Upper lobe of right lung (tissue), 1 donor: ENCODE measurements at regions of chr16 and their contacts with region 1.

Region 1: DNA sequence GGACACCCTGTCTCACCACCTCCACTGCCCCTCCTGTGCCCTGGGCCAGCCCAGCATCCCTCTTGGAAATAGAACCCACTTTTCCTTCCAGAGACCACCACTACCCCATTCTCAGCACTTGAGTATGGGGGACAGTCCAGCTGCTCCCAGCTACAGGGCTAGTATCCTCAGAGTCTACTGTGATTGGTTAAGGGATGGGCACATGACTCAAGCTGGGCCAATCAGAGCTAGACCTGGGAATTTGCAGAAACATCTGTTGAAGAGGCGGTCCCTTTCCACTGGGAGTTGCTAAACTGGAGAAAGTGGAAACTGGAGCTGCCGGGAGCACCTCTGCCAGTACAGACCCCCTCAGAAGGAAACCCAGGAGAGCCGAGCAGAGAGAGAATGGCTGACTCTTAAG is 156.6 kb downstream of the GSG1L start:
- DNase-seq: no peak
- ATAC-seq: no peak
- H3K4me3 ChIP-seq: no peak overlapping the region
- H3K27ac ChIP-seq: no peak overlapping the region
- H3K4me1 ChIP-seq: no peaks in the 10 kb centered on the region
- H3K27me3 ChIP-seq: peaks cover 5% of the 10 kb centered on the region
- CTCF ChIP-seq: no peak

Region 2: GRCh38 chr16:27839419-27839818 is 67.5 kb before region 1 on chr16:
- intact Hi-C with region 1: loop called (anchors 10 kb)
- DNase-seq: peak; percentile 3
- ATAC-seq: no peak
- H3K4me3 ChIP-seq: no peak overlapping the region
- H3K27ac ChIP-seq: no peak overlapping the region
- H3K4me1 ChIP-seq: no peaks in the 10 kb centered on the region
- H3K27me3 ChIP-seq: no peaks in the 10 kb centered on the region
- CTCF ChIP-seq: no peak